Left colon (tissue), 2 donors: ENCODE measurements at regions of chr3 and their contacts with region 1.

Region 1: DNA sequence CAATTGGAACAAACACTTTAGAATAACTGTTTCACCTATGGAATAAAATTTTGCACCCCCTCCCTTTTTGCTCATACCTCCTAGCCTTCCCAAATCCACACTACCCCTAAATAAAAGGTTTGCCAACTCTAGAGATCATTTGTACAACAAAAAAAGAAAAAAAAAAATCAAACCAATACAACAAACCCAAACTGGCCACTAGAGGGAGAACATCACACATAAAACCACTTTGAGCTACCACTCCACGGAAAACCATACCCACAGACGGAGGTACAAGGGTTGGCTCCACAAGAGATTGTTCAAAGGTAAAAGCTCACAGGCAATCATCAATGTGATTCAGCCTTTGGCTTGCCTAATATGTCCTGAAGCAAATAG is 47.6 kb downstream of the SETMAR start:
- DNase-seq: no peak
- ATAC-seq: peak; percentile 79

Region 2: DNA sequence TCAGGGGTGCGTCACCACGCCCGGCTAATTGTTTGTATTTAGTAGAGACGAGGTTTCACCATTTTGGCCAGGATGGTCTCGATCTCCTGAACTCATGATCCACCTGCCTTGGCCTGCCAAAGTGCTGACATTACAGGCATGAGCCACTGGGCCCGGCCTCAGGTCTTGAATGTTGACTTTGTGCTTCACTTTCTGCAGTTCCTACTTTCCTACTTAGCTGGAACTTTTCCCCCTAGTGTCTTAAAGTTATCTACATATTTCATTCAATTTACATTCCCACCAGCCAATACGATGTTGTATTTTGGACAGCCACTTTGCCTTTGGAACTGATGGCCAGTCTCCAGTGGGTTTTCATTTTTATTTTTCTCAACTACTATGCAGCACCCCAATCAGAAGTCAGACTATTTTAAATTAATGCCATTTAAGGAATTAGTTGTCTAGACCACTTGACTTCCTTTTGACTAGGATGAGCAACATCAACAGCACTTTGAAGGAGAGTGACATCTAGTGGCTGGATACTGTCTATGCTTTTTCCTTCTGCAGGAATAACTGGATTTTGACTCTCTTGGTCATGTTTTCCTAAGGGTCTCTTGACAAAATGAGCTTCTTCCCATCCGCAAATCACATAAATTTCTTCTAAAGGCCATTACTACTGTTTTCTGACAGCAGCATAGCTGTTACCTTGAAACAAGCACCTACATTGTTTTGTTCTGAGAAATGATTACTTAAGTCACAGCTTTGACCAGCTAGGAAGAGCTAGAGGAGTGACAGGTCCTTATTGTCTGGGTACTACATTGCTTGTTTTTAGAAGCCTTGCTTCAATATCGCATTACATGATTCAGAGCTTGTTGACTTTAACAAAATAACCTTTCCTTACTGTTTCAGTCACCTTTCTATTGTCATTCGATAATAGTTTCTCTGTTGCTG is 282.6 kb after region 1 on chr3:
- intact Hi-C with region 1: loop called in 1 of 2 experiments (anchors 2 kb)
- DNase-seq: no peak
- ATAC-seq: peak; percentile 67